ENCODE measurements at regions of chr6 and their contacts with region 1.

Region 1: GRCh38 chr6:45922728-45923351 is 92.8 kb downstream of the CLIC5 start:
- DNase-seq: peak in 31 of 35 experiments; percentile 14 to 66 (median 37)
- ATAC-seq: peak in 2 of 4 experiments; percentile 56 to 60
- H3K4me3 ChIP-seq: no peak overlapping the region
- H3K4me3 Mint-ChIP-seq: no peak overlapping the region
- H3K27ac ChIP-seq: no peak overlapping the region
- H3K27ac Mint-ChIP-seq: peak overlapping the region in 1 of 2 donors; percentile 7
- H3K4me1 ChIP-seq: no peaks in the 10 kb centered on the region
- H3K4me1 Mint-ChIP-seq: peaks cover 0 to 11% (median 8%) of the 10 kb centered on the region in 3 donors
- H3K27me3 ChIP-seq: no peaks in the 10 kb centered on the region
- H3K27me3 Mint-ChIP-seq: no peaks in the 10 kb centered on the region

Region 2: GRCh38 chr6:44475779-44476434 is 1446.9 kb before region 1 on chr6:
- CTCF ChIA-PET with region 1: interaction called, 3 to 12 read pairs
- POLR2A ChIA-PET with region 1: no interaction called
- DNase-seq: peak; percentile 14 to 74 (median 51)
- ATAC-seq: peak; percentile 75 to 84 (median 83)
- H3K4me3 ChIP-seq: no peak overlapping the region
- H3K4me3 Mint-ChIP-seq: no peak overlapping the region
- H3K27ac ChIP-seq: no peak overlapping the region
- H3K27ac Mint-ChIP-seq: no peak overlapping the region
- H3K4me1 ChIP-seq: peaks cover 0 to 8% of the 10 kb centered on the region in 2 experiments
- H3K4me1 Mint-ChIP-seq: peaks cover 0 to 2% (median 0%) of the 10 kb centered on the region in 3 donors
- H3K27me3 ChIP-seq: peaks cover 0 to 29% of the 10 kb centered on the region in 2 experiments
- H3K27me3 Mint-ChIP-seq: peaks cover 6 to 8% of the 10 kb centered on the region in 2 donors

Region 3: GRCh38 chr6:44655412-44656342 is 1267.2 kb before region 1 on chr6:
- CTCF ChIA-PET with region 1: interaction called, 3 to 39 read pairs
- POLR2A ChIA-PET with region 1: no interaction called
- DNase-seq: peak; percentile 27 to 79 (median 66)
- ATAC-seq: peak; percentile 61 to 76 (median 74)
- H3K4me3 ChIP-seq: no peak overlapping the region
- H3K4me3 Mint-ChIP-seq: peak overlapping the region; percentile 22 to 58 (median 51)
- H3K27ac ChIP-seq: no peak overlapping the region
- H3K27ac Mint-ChIP-seq: peak overlapping the region; percentile 75 to 88
- H3K4me1 ChIP-seq: peaks cover 4 to 9% of the 10 kb centered on the region in 2 experiments
- H3K4me1 Mint-ChIP-seq: peaks cover 8 to 9% (median 8%) of the 10 kb centered on the region in 3 donors
- H3K27me3 ChIP-seq: peaks cover 0 to 13% of the 10 kb centered on the region in 2 experiments
- H3K27me3 Mint-ChIP-seq: peaks cover 8% of the 10 kb centered on the region in 2 donors

Region 4: DNA sequence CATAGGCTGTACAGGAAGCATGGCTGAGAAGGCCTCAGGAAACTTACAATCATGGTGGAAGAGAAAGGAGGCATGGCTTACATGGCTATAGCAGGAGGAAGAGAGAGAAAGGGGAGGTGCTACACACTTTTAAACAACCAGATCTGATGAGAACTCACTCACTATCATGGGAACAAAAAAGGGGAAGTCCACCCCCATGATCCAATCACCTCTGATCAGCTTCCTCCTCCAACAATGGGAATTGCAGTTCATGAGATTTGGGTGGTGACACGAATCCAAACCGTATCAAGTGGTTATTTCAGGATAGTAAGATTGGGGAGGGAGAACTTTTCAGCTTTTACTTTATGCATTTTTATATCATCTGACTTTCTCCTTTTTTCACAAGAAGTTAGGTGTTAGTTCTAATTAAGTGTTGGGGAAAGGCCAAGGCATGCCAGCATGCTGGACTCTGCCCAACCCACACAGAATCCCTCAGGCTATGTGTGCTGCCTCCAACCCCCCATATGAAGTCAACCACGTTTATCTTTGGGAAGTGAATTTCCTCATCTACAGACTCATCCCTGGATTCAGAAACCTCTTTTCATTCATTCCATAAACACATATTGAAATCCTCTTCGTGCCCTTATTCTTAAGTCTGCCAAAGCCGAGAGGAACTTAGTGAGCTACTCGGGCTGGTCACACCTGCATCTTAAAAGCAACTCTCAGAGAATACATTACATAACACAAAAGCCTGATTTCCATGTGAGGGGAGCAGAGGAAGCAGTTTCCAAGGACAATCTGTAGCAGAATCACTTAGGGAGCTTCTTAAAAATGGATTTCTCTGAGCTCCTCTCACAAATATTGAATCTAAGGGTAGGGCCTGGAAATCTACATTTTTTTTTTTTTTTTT is 109.5 kb after region 1 on chr6:
- CTCF ChIA-PET with region 1: interaction called in 1 of 2 experiments, 12 read pairs
- POLR2A ChIA-PET with region 1: no interaction called
- DNase-seq: no peak
- ATAC-seq: no peak
- H3K4me3 ChIP-seq: no peak overlapping the region
- H3K4me3 Mint-ChIP-seq: no peak overlapping the region
- H3K27ac ChIP-seq: no peak overlapping the region
- H3K27ac Mint-ChIP-seq: no peak overlapping the region
- H3K4me1 ChIP-seq: no peaks in the 10 kb centered on the region
- H3K4me1 Mint-ChIP-seq: no peaks in the 10 kb centered on the region
- H3K27me3 ChIP-seq: no peaks in the 10 kb centered on the region
- H3K27me3 Mint-ChIP-seq: peaks cover 0 to 6% of the 10 kb centered on the region in 2 donors

Measured in T-cell (primary cell).